Tibial artery (tissue), 4 donors: ENCODE measurements at regions of chr16 and their contacts with region 1.

Region 1: GRCh38 chr16:71883849-71884638 is at the start of gene ZNF821:
- DNase-seq: peak; percentile 67 to 83
- H3K4me3 ChIP-seq: peak within 1 kb of the TSS; percentile 82 to 92
- H3K27ac ChIP-seq: peak within 1 kb of the TSS; percentile 92 to 94
- H3K4me1 ChIP-seq: peaks cover 0 to 9% (median 2%) of the 10 kb centered on the region in 4 donors
- H3K27me3 ChIP-seq: no peaks in the 10 kb centered on the region
- CTCF ChIP-seq: peak; percentile 6 to 48

Region 2: GRCh38 chr16:71723537-71724319 is 160.3 kb before region 1 on chr16:
- intact Hi-C with region 1: loop called (anchors 5 kb)
- DNase-seq: peak; percentile 62 to 89
- H3K4me3 ChIP-seq: peak overlapping the region; percentile 72 to 95
- H3K27ac ChIP-seq: peak overlapping the region; percentile 85 to 94
- H3K4me1 ChIP-seq: peaks cover 0 to 35% (median 16%) of the 10 kb centered on the region in 4 donors
- H3K27me3 ChIP-seq: no peaks in the 10 kb centered on the region
- CTCF ChIP-seq: peak; percentile 5 to 7

Region 3: DNA sequence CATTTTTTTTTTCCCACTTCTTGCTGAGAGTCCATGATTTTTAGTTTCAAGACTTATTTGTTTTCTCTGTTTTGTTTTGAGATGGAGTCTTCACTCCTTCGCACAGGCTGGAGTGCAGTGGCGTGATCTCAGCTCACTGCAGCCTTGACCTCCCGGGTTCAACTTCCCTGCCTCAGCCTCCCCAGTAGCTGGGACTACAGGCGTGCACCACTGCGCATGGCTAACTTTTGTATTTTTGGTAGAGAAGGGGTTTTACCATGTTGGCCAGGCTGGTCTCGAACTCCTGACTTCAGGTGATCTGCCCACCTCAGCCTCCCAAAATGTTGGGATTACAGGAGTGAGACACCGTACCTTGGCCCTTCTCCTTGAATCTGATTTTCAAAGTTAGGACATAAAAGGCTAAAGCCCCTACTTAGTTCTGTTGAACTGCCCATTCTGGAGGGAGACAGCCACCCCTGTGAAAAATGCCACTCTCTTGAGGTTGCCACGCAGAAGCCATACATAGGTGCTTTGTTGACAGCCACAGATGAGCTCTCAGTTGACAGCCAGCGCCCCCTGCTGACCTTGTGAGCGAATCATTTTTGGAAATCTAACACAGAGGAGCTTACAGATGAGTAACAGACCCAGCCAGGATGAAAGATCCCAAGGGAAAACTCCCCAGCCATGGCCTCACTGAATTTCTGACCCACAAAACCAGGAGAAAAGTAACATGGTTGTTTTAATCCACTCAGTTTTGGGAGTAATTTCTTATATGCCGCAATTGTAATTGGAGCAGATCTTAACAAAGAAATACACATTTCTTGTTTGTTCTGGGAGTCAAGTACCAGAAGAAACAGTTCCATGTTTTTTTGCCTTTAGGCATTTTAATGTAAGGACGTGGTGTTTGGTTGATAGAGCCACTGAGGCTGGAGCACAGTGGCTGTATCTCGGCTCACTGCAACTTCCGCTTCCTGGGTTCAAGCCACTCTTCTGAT is 77.3 kb after region 1 on chr16:
- intact Hi-C with region 1: loop called (anchors 2 kb)
- DNase-seq: peak; percentile 80 to 87
- H3K4me3 ChIP-seq: no peak overlapping the region
- H3K27ac ChIP-seq: no peak overlapping the region
- H3K4me1 ChIP-seq: no peaks in the 10 kb centered on the region
- H3K27me3 ChIP-seq: no peaks in the 10 kb centered on the region
- CTCF ChIP-seq: peak; percentile 67 to 74